ENCODE measurements at regions of chr2 and their contacts with region 1.

Region 1: GRCh38 chr2:208713066-208713745 is 306.6 kb downstream of the PTH2R start:
- DNase-seq: no peak
- ATAC-seq: no peak
- H3K4me3 ChIP-seq: no peak overlapping the region
- H3K27ac ChIP-seq: no peak overlapping the region
- H3K4me1 ChIP-seq: no peaks in the 10 kb centered on the region
- H3K27me3 ChIP-seq: no peaks in the 10 kb centered on the region
- CTCF ChIP-seq: no peak
- POLR2A ChIP-seq: no peak

Region 2: GRCh38 chr2:208280933-208281332 is 432.3 kb before region 1 on chr2:
- intact Hi-C with region 1: no loop called
- DNase-seq: no peak
- ATAC-seq: no peak
- H3K4me3 ChIP-seq: no peak overlapping the region
- H3K27ac ChIP-seq: no peak overlapping the region
- H3K4me1 ChIP-seq: peaks cover 0 to 14% (median 5%) of the 10 kb centered on the region in 12 donors
- H3K27me3 ChIP-seq: no peaks in the 10 kb centered on the region
- CTCF ChIP-seq: no peak
- POLR2A ChIP-seq: no peak

Region 3: DNA sequence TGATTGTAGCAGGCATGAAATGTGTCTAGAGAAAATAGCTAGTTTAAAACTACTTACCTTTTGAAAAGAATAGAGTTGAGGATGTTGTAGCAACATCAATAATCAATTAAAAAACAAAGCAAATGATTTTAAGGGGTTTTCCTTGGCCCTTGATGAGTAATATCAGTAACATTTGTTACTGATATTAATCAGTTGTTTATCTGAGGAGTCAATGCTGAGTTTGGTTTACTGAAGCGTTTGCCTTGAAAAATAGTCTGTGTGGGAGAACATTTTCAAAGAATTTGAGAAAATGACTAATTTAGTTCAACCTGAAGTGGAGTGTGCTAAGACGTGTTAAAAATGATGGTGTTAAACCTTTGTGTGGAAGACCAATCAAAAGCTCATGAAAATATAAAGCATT is 297.3 kb before region 1 on chr2:
- intact Hi-C with region 1: no loop called
- DNase-seq: no peak
- ATAC-seq: no peak
- H3K4me3 ChIP-seq: no peak overlapping the region
- H3K27ac ChIP-seq: no peak overlapping the region
- H3K4me1 ChIP-seq: no peaks in the 10 kb centered on the region
- H3K27me3 ChIP-seq: peaks cover 0 to 5% (median 0%) of the 10 kb centered on the region in 9 donors
- CTCF ChIP-seq: no peak
- POLR2A ChIP-seq: no peak

Region 4: DNA sequence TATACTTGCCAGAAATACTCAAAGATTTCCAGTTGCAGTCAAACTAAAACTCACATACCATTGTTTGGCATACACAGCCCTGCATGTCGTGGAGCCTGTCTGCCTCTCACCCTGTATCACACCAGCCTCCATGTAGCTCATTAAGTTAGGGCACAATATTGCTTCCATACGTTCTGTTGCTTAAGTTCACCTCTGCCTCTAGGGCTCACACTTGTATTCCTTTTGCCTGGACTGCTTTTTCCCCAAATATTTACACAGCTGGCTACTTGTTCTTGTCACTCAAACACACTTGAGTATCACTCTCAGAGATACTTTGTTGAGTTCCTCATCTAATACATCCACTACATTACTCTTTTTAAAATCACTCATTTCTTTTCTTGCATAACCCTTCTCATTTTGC is 223.5 kb before region 1 on chr2:
- intact Hi-C with region 1: no loop called
- DNase-seq: no peak
- ATAC-seq: no peak
- H3K4me3 ChIP-seq: no peak overlapping the region
- H3K27ac ChIP-seq: no peak overlapping the region
- H3K4me1 ChIP-seq: no peaks in the 10 kb centered on the region
- H3K27me3 ChIP-seq: no peaks in the 10 kb centered on the region
- CTCF ChIP-seq: no peak
- POLR2A ChIP-seq: no peak

Region 5: GRCh38 chr2:208608127-208608806 is 104.9 kb before region 1 on chr2:
- intact Hi-C with region 1: loop called in 1 of 10 experiments (anchors 10 kb)
- DNase-seq: no peak
- ATAC-seq: no peak
- H3K4me3 ChIP-seq: no peak overlapping the region
- H3K27ac ChIP-seq: no peak overlapping the region
- H3K4me1 ChIP-seq: no peaks in the 10 kb centered on the region
- H3K27me3 ChIP-seq: no peaks in the 10 kb centered on the region
- CTCF ChIP-seq: no peak
- POLR2A ChIP-seq: no peak

Region 6: DNA sequence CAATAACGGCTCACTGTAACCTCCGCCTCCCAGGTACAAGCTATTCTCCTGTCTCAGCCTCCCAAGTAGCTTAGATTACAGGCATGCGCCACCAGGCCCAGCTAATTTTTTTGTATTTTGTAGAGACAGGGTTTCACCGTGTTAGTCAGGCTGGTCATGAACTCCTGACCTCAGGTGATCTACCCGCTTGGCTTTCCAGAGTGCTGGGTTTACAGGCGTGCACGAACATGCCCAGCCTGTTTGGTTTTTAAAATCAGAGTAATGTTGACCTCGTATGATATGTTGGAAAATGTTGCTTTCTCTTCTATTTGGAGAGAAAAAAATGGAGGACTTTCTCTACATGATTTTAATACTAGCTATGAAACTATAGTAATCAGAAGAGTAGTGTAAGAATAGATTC is 79.6 kb after region 1 on chr2:
- intact Hi-C with region 1: no loop called
- DNase-seq: no peak
- ATAC-seq: no peak
- H3K4me3 ChIP-seq: no peak overlapping the region
- H3K27ac ChIP-seq: no peak overlapping the region
- H3K4me1 ChIP-seq: no peaks in the 10 kb centered on the region
- H3K27me3 ChIP-seq: no peaks in the 10 kb centered on the region
- CTCF ChIP-seq: no peak
- POLR2A ChIP-seq: no peak